ENCODE measurements at regions of chrX and their contacts with region 1.

Region 1: GRCh38 chrX:130086447-130087206 is 23.7 kb downstream of the ELF4 start:
- DNase-seq: no peak
- ATAC-seq: peak; percentile 38
- H3K4me3 Mint-ChIP-seq: peak overlapping the region; percentile 62
- H3K27ac Mint-ChIP-seq: peak overlapping the region; percentile 89
- H3K4me1 Mint-ChIP-seq: peaks cover 78% of the 10 kb centered on the region
- H3K27me3 Mint-ChIP-seq: no peaks in the 10 kb centered on the region
- CTCF ChIP-seq: no peak

Region 2: GRCh38 chrX:130179579-130180215 is 93.1 kb after region 1 on chrX:
- CTCF ChIA-PET with region 1: no interaction called
- POLR2A ChIA-PET with region 1: no interaction called
- intact Hi-C with region 1: loop called (anchors 1 kb)
- DNase-seq: no peak
- ATAC-seq: no peak
- H3K4me3 Mint-ChIP-seq: no peak overlapping the region
- H3K27ac Mint-ChIP-seq: no peak overlapping the region
- H3K4me1 Mint-ChIP-seq: peaks cover 42% of the 10 kb centered on the region
- H3K27me3 Mint-ChIP-seq: no peaks in the 10 kb centered on the region
- CTCF ChIP-seq: no peak

Region 3: DNA sequence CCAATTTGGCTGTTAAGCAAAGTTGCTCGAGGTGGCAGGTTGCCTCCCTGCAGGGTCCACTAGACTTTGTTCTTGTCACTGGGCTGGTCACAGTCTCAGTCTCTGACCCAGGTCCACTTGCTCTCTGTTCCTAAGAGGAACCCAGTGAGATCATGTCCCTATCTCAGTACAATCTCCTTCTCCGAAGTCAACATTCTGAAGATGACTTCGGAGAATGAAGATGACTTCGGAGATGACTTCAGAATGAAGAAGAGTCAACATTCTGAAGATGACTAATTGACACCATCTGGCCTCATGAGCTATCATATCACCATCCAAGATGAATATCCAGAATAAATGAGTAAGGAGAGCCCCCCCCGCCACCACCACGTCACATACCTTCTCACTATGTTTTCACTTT is 1357.2 kb after region 1 on chrX:
- CTCF ChIA-PET with region 1: no interaction called
- POLR2A ChIA-PET with region 1: no interaction called
- intact Hi-C with region 1: no loop called
- DNase-seq: no peak
- ATAC-seq: no peak
- H3K4me3 Mint-ChIP-seq: no peak overlapping the region
- H3K27ac Mint-ChIP-seq: no peak overlapping the region
- H3K4me1 Mint-ChIP-seq: no peaks in the 10 kb centered on the region
- H3K27me3 Mint-ChIP-seq: no peaks in the 10 kb centered on the region
- CTCF ChIP-seq: no peak